Sigmoid colon (tissue), 7 donors: ENCODE measurements at regions of chr11 and their contacts with region 1.

Region 1: GRCh38 chr11:61429691-61430582 is at the starts of genes CPSF7 and SDHAF2:
- DNase-seq: peak; percentile 98
- H3K4me3 ChIP-seq: peak within 1 kb of the TSS; percentile 82 to 93 (median 86)
- H3K27ac ChIP-seq: peak within 1 kb of the TSS; percentile 93 to 99 (median 98)
- H3K4me1 ChIP-seq: peaks cover 0 to 50% (median 43%) of the 10 kb centered on the region in 4 donors
- H3K27me3 ChIP-seq: no peaks in the 10 kb centered on the region
- CTCF ChIP-seq: no peak
- EP300 ChIP-seq: peak in 1 of 4 donors; percentile 28
- POLR2A ChIP-seq: peak; percentile 43 to 50
- total RNA-seq, gene CPSF7: 38.2 to 45.4 (median 42.0) TPM
- total RNA-seq, gene SDHAF2: 27.3 to 97.3 (median 61.2) TPM

Region 2: GRCh38 chr11:60951899-60952741 is 477.8 kb before region 1 on chr11 and contains the start of gene SLC15A3:
- intact Hi-C with region 1: no loop called
- DNase-seq: peak; percentile 87
- H3K4me3 ChIP-seq: peak within 1 kb of the TSS; percentile 39 to 59 (median 54)
- H3K27ac ChIP-seq: peak within 1 kb of the TSS; percentile 79 to 87 (median 82)
- H3K4me1 ChIP-seq: peaks cover 0 to 31% (median 25%) of the 10 kb centered on the region in 4 donors
- H3K27me3 ChIP-seq: no peaks in the 10 kb centered on the region
- CTCF ChIP-seq: no peak
- EP300 ChIP-seq: no peak
- POLR2A ChIP-seq: no peak
- total RNA-seq, gene SLC15A3: 12.8 to 43.9 (median 28.6) TPM

Region 3: GRCh38 chr11:61294717-61295595 is 135.0 kb before region 1 on chr11 and contains the start of gene VWCE:
- intact Hi-C with region 1: no loop called
- DNase-seq: peak; percentile 70
- H3K4me3 ChIP-seq: peak within 1 kb of the TSS; percentile 28 to 55 (median 48)
- H3K27ac ChIP-seq: peak within 1 kb of the TSS in 2 of 4 donors; percentile 41 to 44
- H3K4me1 ChIP-seq: peaks cover 0 to 35% (median 27%) of the 10 kb centered on the region in 4 donors
- H3K27me3 ChIP-seq: peaks cover 6 to 42% (median 26%) of the 10 kb centered on the region in 3 donors
- CTCF ChIP-seq: no peak
- EP300 ChIP-seq: no peak
- POLR2A ChIP-seq: no peak
- total RNA-seq, gene VWCE: 0.49 to 5.5 (median 0.81) TPM

Region 4: DNA sequence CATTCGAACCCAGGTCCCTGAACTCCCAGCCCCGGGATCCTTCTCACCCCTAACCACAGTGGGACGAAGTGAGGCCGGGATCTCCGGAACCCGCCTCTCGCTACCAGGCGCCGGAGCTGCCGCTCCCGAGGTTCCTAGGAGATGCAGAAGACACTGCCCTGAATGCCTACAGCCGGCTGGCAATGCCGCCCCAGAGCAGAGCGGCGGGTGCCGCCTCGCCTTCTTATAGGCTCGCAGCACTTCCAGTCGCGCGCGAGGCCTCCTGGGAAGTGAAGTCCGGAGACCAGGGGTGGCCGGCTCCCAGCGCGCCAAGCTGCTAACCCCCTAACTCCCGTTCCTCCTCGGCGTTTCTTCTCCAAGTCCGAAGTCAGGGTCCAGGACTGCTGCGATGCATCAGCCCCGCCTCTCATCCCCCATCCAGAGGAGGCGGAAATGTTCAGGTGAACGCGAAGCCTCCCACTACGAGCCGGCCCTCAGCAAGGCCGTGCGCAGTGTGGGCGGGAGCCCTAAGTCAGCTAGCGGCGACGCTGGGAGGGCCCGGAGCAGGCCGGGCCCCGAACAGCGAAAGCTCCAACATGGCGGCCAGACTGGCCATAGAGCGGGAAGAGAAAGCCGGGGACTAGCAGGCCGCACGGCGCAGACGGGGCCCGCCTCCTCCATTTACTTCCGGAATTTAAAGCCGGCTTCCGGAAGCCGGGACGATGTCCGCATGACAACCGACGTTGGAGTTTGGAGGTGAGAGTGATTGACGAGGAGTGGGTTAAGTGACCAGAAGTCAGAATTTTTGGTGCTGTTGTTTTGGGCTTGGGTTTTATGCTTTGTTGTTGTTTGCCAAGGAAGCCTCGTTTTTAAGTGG is 68.0 kb before region 1 on chr11 and contains the starts of genes CYB561A3 and TMEM138:
- intact Hi-C with region 1: loop called (anchors 2 kb)
- DNase-seq: peak; percentile 97
- H3K4me3 ChIP-seq: peak within 1 kb of the TSS; percentile 56 to 70 (median 64)
- H3K27ac ChIP-seq: peak within 1 kb of the TSS; percentile 90 to 100 (median 96)
- H3K4me1 ChIP-seq: peaks cover 2 to 30% (median 27%) of the 10 kb centered on the region in 4 donors
- H3K27me3 ChIP-seq: no peaks in the 10 kb centered on the region
- CTCF ChIP-seq: no peak
- EP300 ChIP-seq: no peak
- POLR2A ChIP-seq: peak; percentile 47 to 85
- total RNA-seq, gene CYB561A3: 17.3 to 39.6 (median 30.5) TPM
- total RNA-seq, gene TMEM138: 13.5 to 33.8 (median 21.0) TPM

Region 5: DNA sequence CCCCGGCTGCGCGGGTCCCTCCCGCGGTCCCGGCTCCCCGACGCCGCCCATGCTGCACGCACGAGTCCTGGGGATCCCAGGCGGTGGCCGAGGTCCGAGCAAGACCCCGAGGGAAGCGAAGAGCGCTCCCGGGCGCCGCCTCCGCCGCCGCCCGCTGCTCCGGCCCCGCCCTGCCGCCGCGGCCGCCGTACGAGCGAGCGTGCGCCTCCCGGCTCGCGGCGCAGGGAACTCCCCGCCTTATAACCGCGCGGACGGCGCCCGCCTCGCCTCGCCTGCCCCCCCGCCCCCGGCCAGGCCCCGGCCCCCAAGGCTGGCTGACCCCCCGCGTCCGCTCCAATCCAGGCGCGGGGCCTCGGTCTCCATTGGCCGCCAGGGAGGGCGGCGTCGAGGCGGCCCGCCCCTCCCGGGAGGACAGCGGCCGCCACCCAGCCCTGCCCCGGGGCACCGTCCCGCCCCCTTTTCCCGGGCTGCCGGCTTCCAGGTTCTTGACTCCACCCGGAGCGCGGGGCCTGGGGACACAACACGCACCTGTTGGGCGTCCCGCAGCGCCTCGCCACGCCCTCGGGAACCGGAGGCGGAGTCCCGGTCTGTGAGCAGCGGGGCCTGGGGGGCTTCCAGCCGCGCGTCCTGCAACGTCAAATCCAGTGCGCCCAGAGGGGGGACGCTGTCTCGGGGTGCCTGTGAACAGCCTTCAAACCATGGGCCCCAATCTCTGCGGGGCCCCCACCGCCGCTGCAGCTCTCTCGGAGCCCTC is 461.6 kb after region 1 on chr11 and contains the start of gene FADS3:
- intact Hi-C with region 1: no loop called
- DNase-seq: peak; percentile 94
- H3K4me3 ChIP-seq: peak within 1 kb of the TSS; percentile 75 to 94 (median 84)
- H3K27ac ChIP-seq: peak within 1 kb of the TSS; percentile 85 to 96 (median 90)
- H3K4me1 ChIP-seq: peaks cover 0 to 46% (median 33%) of the 10 kb centered on the region in 4 donors
- H3K27me3 ChIP-seq: no peaks in the 10 kb centered on the region
- CTCF ChIP-seq: no peak
- EP300 ChIP-seq: no peak
- POLR2A ChIP-seq: no peak
- total RNA-seq, gene FADS3: 21.1 to 57.9 (median 37.5) TPM